MCF 10A (cell line): ENCODE measurements at regions of chr13 and their contacts with region 1.

Region 1: DNA sequence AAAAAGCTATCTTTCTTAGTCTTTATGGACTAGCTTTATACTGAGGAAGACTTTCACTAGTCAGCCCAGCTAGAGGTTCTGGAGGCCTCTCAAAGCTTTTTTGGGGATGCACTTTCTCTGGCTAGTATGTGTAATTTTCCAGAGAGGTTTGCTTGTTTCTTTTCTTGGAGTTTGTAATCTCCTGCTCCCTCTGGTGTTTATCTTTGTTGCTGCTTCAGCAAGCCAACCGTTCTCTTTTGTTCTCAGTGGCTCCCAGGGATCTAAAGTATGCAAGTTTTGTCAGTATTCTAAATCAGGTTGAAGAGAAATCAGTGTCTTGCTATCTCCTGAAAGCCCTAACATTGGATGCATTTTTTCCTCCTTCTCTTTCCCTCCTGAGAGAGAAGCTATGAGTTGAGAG is 121.1 kb upstream of the MYO16 start:
- DNase-seq: peak; percentile 29
- H3K4me3 Mint-ChIP-seq: no peak overlapping the region
- H3K27ac Mint-ChIP-seq: no peak overlapping the region
- H3K4me1 Mint-ChIP-seq: no peaks in the 10 kb centered on the region
- H3K27me3 Mint-ChIP-seq: peaks cover 48% of the 10 kb centered on the region
- CTCF ChIP-seq: peak; percentile 70

Region 2: DNA sequence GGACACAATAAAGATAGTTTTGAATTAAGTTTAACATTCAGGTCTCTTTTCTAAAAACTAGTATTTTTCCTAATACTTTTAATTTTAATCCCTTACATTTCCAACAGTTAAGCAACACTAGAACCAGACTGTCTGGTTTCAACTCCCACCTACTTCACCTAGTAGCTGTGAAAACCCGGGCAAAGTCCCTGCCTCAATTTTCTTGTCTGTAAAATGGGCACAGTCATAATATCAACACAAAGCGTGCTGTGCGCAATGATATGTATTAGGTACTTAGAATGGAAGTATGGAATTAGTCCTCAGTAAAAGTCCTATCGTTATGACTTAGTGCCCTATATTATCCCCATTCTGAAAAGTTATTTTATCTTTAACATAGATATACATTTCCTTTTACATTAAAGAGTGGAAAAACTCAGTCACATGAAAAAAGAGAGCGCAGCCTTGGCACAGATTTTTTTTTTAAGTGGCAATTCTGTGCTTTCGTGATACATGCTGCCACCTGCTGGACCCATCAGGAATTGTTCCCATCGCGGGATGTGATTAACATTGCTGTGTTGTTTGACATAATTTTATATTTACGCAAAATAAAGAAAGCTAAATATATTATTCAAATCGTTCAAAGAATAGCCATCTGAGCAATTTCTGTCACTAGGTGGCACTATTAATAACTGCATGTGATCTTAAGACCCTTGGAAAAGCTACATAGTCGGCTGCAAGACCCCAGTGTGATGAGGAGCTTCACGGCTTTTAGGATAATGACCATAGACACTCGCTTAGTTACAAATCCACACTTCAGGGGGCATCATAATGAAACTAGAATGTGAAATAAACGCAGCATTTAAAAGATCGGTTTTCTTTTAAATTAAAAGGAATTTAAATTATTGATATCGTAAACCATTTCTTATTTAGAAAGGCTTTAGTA is 352.8 kb before region 1 on chr13:
- CTCF ChIA-PET with region 1: no interaction called
- POLR2A ChIA-PET with region 1: no interaction called
- intact Hi-C with region 1: no loop called
- DNase-seq: peak; percentile 67
- H3K4me3 Mint-ChIP-seq: no peak overlapping the region
- H3K27ac Mint-ChIP-seq: no peak overlapping the region
- H3K4me1 Mint-ChIP-seq: no peaks in the 10 kb centered on the region
- H3K27me3 Mint-ChIP-seq: no peaks in the 10 kb centered on the region
- CTCF ChIP-seq: peak; percentile 69

Region 3: GRCh38 chr13:108276060-108276459 is 232.2 kb before region 1 on chr13:
- CTCF ChIA-PET with region 1: no interaction called
- POLR2A ChIA-PET with region 1: no interaction called
- intact Hi-C with region 1: no loop called
- DNase-seq: no peak
- H3K4me3 Mint-ChIP-seq: no peak overlapping the region
- H3K27ac Mint-ChIP-seq: no peak overlapping the region
- H3K4me1 Mint-ChIP-seq: peaks cover 7% of the 10 kb centered on the region
- H3K27me3 Mint-ChIP-seq: no peaks in the 10 kb centered on the region
- CTCF ChIP-seq: no peak

Region 4: DNA sequence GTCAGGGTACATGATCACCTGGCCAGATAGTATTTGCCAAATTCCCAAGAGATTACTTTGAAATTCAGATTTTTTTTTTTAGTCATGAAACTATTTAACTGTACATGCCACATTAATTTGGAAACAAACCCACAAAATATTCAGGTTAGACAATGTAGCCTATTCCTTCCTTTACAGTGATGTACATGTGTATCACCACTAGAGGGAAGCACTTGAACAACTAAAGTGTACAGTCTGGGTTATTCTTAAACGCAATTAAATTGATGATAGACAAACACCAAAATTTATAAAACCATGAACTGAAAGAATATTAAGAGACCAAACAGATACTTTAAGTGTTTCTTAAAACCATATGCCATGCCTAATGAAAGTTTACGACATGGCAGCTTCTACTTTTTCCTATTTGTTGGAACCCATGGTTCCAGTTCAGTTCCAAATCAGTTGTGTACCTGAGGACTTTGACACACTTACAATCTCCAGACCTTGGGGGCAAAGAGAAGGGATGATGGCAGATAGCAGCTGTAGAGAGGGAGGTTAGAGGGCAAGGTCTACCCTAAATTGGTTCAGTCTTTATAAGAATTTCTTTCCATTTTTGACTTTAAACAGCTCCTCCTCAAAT is 185.9 kb before region 1 on chr13:
- CTCF ChIA-PET with region 1: interaction called, 35 read pairs
- POLR2A ChIA-PET with region 1: no interaction called
- intact Hi-C with region 1: loop called (anchors 5 kb)
- DNase-seq: peak; percentile 59
- H3K4me3 Mint-ChIP-seq: no peak overlapping the region
- H3K27ac Mint-ChIP-seq: no peak overlapping the region
- H3K4me1 Mint-ChIP-seq: no peaks in the 10 kb centered on the region
- H3K27me3 Mint-ChIP-seq: peaks cover 88% of the 10 kb centered on the region
- CTCF ChIP-seq: peak; percentile 59

Region 5: GRCh38 chr13:108352599-108352998 is 155.7 kb before region 1 on chr13:
- CTCF ChIA-PET with region 1: interaction called, 14 read pairs
- POLR2A ChIA-PET with region 1: interaction called, 3 read pairs
- intact Hi-C with region 1: no loop called
- DNase-seq: no peak
- H3K4me3 Mint-ChIP-seq: no peak overlapping the region
- H3K27ac Mint-ChIP-seq: no peak overlapping the region
- H3K4me1 Mint-ChIP-seq: no peaks in the 10 kb centered on the region
- H3K27me3 Mint-ChIP-seq: peaks cover 79% of the 10 kb centered on the region
- CTCF ChIP-seq: no peak

Region 6: DNA sequence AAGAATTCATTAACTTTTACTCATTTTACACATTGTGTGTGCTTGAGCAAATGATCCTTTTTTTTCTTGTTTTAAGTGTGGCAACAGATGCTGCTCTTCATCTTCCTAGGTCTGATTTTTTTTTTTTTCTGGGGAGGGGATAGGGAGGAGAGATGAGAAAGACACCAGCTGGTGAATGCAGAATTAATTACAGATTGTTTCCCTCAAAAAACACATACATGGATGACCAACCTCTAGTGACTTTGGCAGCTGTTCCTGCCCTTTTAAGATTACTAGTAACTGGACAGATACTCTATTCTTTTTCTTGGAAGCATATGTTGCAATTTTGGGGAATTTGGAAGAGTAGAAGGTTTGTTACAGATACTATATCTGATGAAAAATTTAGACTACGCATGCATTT is 17.6 kb after region 1 on chr13:
- CTCF ChIA-PET with region 1: interaction called, 12 read pairs
- POLR2A ChIA-PET with region 1: no interaction called
- intact Hi-C with region 1: no loop called
- DNase-seq: no peak
- H3K4me3 Mint-ChIP-seq: no peak overlapping the region
- H3K27ac Mint-ChIP-seq: no peak overlapping the region
- H3K4me1 Mint-ChIP-seq: no peaks in the 10 kb centered on the region
- H3K27me3 Mint-ChIP-seq: peaks cover 93% of the 10 kb centered on the region
- CTCF ChIP-seq: no peak

Region 7: DNA sequence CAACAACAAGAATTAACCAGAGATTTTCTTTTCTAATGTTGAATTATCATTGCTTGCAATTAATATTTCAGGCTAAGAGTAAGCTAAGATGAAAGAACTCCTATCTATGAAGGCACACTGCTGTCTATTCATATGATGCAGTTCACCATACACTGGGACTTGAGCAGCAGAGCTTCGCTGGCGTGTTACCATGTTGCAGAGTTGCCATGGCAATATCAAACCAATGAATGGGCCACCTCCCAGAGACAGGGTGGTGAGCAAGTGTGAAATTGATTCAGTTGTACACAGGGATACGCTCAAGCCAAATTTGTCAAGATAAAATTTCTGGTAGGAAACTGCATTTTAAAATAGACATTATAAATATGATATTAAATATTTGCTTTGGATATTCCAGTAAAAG is 51.8 kb after region 1 on chr13:
- CTCF ChIA-PET with region 1: no interaction called
- POLR2A ChIA-PET with region 1: no interaction called
- intact Hi-C with region 1: no loop called
- DNase-seq: no peak
- H3K4me3 Mint-ChIP-seq: no peak overlapping the region
- H3K27ac Mint-ChIP-seq: no peak overlapping the region
- H3K4me1 Mint-ChIP-seq: no peaks in the 10 kb centered on the region
- H3K27me3 Mint-ChIP-seq: peaks cover 20% of the 10 kb centered on the region
- CTCF ChIP-seq: no peak